CD4-positive, alpha-beta T cell (primary cell): ENCODE measurements at regions of chr3 and their contacts with region 1.

Region 1: DNA sequence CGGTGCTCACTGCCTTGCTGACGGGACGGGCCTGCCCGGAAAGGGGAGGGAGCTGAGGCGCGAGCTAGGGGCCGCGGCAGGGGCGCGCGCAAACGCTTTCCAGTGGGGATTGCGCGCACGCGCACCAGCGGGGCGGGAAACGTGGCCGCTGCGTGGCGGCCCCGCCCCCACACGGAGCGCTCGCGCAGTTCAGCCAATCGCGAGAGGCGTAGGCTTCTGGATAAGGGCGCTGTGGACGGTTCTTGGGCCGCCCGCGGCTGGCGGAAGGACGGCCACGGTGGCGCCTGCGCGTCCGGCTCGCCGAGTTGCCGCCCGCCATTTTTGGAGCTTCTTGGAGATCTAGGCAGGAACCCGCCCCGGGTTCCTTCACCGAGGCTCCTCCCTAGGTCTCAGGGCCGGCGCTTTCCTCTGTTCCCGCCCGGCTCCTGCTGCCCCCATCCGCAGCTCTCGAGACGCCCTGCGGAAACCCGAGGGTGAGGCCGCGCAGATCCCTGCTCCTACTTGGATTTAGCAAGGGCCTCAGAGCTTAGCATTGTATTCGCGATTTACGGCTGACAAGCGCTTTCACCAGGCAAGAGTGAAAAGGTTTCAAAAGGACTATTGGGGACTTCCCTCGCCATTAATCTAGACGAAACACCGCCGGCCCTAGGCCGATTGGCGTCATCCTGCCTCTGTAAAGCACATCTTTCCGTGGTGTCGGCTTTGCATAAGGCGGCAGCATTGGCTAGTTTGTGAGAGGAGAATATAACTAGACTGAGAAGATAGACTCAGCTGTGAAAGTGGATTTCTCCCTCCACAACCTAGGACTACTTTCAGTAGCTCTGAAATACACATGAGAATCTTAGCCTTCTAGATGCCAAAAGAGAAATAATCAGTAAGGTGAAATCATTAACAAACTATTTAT is 496 bp upstream of the STAG1 start:
- DNase-seq: peak; percentile 96 to 100 (median 99)
- ATAC-seq: peak; percentile 79
- H3K4me3 ChIP-seq: peak overlapping the region; percentile 90
- H3K4me3 Mint-ChIP-seq: peak overlapping the region; percentile 99
- H3K27ac ChIP-seq: peak overlapping the region; percentile 98 to 99
- H3K27ac Mint-ChIP-seq: peak overlapping the region; percentile 97
- H3K4me1 ChIP-seq: peaks cover 33% of the 10 kb centered on the region
- H3K4me1 Mint-ChIP-seq: peaks cover 46% of the 10 kb centered on the region
- H3K27me3 ChIP-seq: no peaks in the 10 kb centered on the region
- H3K27me3 Mint-ChIP-seq: no peaks in the 10 kb centered on the region
- CTCF ChIP-seq: peak; percentile 28

Region 2: GRCh38 chr3:136075218-136075808 is 677.4 kb before region 1 on chr3:
- CTCF ChIA-PET with region 1: interaction called, 5 read pairs
- POLR2A ChIA-PET with region 1: interaction called, 10 read pairs
- intact Hi-C with region 1: loop called (anchors 1 to 2 kb)
- DNase-seq: peak; percentile 56 to 87 (median 68)
- ATAC-seq: peak; percentile 61
- H3K4me3 ChIP-seq: no peak overlapping the region
- H3K4me3 Mint-ChIP-seq: no peak overlapping the region
- H3K27ac ChIP-seq: no peak overlapping the region
- H3K27ac Mint-ChIP-seq: no peak overlapping the region
- H3K4me1 ChIP-seq: no peaks in the 10 kb centered on the region
- H3K4me1 Mint-ChIP-seq: no peaks in the 10 kb centered on the region
- H3K27me3 ChIP-seq: no peaks in the 10 kb centered on the region
- H3K27me3 Mint-ChIP-seq: no peaks in the 10 kb centered on the region
- CTCF ChIP-seq: peak; percentile 98

Region 3: GRCh38 chr3:136390574-136390973 is 362.1 kb before region 1 on chr3:
- CTCF ChIA-PET with region 1: interaction called, 26 read pairs
- POLR2A ChIA-PET with region 1: interaction called, 22 read pairs
- intact Hi-C with region 1: loop called (anchors 2 kb)
- DNase-seq: no peak
- ATAC-seq: no peak
- H3K4me3 ChIP-seq: no peak overlapping the region
- H3K4me3 Mint-ChIP-seq: no peak overlapping the region
- H3K27ac ChIP-seq: no peak overlapping the region
- H3K27ac Mint-ChIP-seq: no peak overlapping the region
- H3K4me1 ChIP-seq: peaks cover 3% of the 10 kb centered on the region
- H3K4me1 Mint-ChIP-seq: no peaks in the 10 kb centered on the region
- H3K27me3 ChIP-seq: no peaks in the 10 kb centered on the region
- H3K27me3 Mint-ChIP-seq: no peaks in the 10 kb centered on the region
- CTCF ChIP-seq: no peak

Region 4: DNA sequence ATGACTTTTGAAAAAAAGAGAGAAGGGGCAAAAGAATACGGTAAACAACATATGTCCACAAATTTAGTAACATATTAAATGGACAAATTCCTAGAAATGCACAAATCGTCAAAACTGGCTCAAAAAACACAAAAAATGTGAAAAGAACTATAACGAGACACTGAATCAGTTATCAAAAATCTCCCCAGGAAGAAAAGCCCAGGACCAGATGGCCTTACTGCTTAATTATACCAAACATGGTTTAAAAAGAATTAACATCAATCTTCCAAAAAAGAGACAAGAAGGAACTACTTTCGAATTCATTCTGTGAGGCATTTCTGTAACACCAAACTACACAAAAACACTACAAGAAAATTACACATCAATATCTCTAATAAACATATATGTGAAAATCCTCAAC is 117.9 kb before region 1 on chr3:
- CTCF ChIA-PET with region 1: interaction called, 6 read pairs
- POLR2A ChIA-PET with region 1: interaction called, 3 read pairs
- intact Hi-C with region 1: loop called in 1 of 2 experiments (anchors 5 kb)
- DNase-seq: no peak
- ATAC-seq: no peak
- H3K4me3 ChIP-seq: no peak overlapping the region
- H3K4me3 Mint-ChIP-seq: no peak overlapping the region
- H3K27ac ChIP-seq: no peak overlapping the region
- H3K27ac Mint-ChIP-seq: no peak overlapping the region
- H3K4me1 ChIP-seq: no peaks in the 10 kb centered on the region
- H3K4me1 Mint-ChIP-seq: peaks cover 63% of the 10 kb centered on the region
- H3K27me3 ChIP-seq: no peaks in the 10 kb centered on the region
- H3K27me3 Mint-ChIP-seq: no peaks in the 10 kb centered on the region
- CTCF ChIP-seq: no peak

Region 5: GRCh38 chr3:136861890-136862616 is 109.4 kb after region 1 on chr3 and contains the start of gene NCK1:
- CTCF ChIA-PET with region 1: interaction called, 81 read pairs
- POLR2A ChIA-PET with region 1: interaction called, 188 read pairs
- intact Hi-C with region 1: loop called (anchors 1 to 2 kb)
- DNase-seq: peak; percentile 96 to 99 (median 98)
- ATAC-seq: peak; percentile 95
- H3K4me3 ChIP-seq: peak within 1 kb of the TSS; percentile 93
- H3K4me3 Mint-ChIP-seq: peak within 1 kb of the TSS; percentile 92
- H3K27ac ChIP-seq: peak within 1 kb of the TSS; percentile 93 to 94
- H3K27ac Mint-ChIP-seq: peak within 1 kb of the TSS; percentile 97
- H3K4me1 ChIP-seq: peaks cover 37% of the 10 kb centered on the region
- H3K4me1 Mint-ChIP-seq: peaks cover 65% of the 10 kb centered on the region
- H3K27me3 ChIP-seq: no peaks in the 10 kb centered on the region
- H3K27me3 Mint-ChIP-seq: no peaks in the 10 kb centered on the region
- CTCF ChIP-seq: no peak
- total RNA-seq, gene NCK1: 52.9 to 55.0 TPM

Region 6: DNA sequence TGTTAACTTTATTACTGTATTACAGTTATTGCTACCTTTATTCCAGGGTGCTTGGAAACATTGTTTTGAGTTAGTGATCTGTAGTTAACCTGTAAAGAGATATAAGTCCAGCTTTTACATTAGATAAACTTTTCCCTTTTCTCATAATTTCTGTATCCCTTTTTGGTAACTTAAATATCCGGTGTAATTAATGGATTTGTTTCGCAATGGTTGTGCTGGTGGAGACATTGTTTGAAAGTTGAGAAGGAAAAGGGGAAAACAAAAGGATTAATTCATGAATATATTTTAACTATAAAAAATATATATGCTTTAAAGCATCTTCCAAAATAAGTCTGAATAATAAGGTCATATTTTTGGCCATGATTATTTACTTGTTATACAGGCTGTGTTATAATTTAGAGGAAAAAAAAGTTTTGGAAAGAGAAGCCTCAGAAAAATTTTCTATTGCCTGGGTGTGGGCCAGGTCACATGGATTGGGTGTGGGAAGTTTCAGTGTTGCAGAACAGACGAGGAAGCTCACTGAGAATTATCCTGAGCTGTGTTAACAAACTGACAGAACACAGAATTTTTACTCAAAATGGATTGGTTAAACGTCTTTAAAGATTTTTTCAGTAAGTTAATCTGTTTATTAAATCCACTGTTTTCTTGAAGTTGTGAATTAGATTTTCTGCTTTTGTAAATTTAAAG is 177.5 kb after region 1 on chr3:
- CTCF ChIA-PET with region 1: interaction called, 4 read pairs
- POLR2A ChIA-PET with region 1: no interaction called
- intact Hi-C with region 1: loop called in 1 of 2 experiments (anchors 10 kb)
- DNase-seq: peak in 1 of 14 experiments; percentile 25
- ATAC-seq: no peak
- H3K4me3 ChIP-seq: no peak overlapping the region
- H3K4me3 Mint-ChIP-seq: no peak overlapping the region
- H3K27ac ChIP-seq: no peak overlapping the region
- H3K27ac Mint-ChIP-seq: no peak overlapping the region
- H3K4me1 ChIP-seq: peaks cover 4% of the 10 kb centered on the region
- H3K4me1 Mint-ChIP-seq: peaks cover 75% of the 10 kb centered on the region
- H3K27me3 ChIP-seq: no peaks in the 10 kb centered on the region
- H3K27me3 Mint-ChIP-seq: no peaks in the 10 kb centered on the region
- CTCF ChIP-seq: no peak